ENCODE measurements at regions of chr13 and their contacts with region 1.

Region 1: GRCh38 chr13:106536244-106537034 is 977 bp upstream of the EFNB2 start:
- DNase-seq: peak; percentile 95
- ATAC-seq: peak; percentile 79

Region 2: DNA sequence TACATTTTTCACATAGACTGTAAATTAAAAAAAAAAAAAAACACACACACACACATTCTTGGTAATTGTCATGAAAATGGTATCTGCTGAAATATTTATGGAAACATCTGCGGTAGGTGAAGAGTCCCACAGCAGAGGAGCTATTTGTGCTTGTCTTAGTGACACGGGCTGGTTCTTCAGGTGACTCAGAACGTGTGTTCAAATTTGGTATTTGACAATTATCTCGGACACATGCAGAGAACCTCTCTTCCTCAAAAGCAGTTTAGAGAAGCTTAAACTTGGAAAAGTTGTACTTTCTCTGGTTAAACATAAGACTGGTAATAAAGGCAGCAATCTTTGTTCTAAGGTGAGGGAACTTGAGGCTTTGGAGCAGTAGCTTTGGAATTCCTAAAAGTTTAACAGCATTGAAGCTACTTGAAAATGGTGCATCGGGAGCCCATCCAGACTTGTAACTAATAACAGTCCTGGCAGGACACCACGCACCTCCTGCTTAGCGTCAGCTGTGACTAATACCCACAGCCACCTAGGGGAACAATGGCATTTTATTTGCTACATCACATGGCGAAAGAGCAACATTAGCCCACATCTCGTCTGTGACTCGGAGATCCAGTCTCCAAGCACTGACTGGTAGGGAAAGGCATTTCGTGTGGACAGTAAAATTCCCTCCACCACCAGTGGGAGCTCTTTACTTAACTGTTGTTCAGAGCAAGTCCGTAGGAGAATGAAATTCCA is 1965.1 kb before region 1 on chr13:
- intact Hi-C with region 1: loop called (anchors 5 kb)
- DNase-seq: no peak
- ATAC-seq: peak; percentile 52

Region 3: GRCh38 chr13:105410602-105411001 is 1125.8 kb before region 1 on chr13:
- intact Hi-C with region 1: loop called (anchors 2 kb)
- DNase-seq: peak; percentile 77
- ATAC-seq: no peak

Region 4: GRCh38 chr13:106291006-106291405 is 245.4 kb before region 1 on chr13:
- intact Hi-C with region 1: no loop called
- DNase-seq: no peak
- ATAC-seq: no peak

Region 5: DNA sequence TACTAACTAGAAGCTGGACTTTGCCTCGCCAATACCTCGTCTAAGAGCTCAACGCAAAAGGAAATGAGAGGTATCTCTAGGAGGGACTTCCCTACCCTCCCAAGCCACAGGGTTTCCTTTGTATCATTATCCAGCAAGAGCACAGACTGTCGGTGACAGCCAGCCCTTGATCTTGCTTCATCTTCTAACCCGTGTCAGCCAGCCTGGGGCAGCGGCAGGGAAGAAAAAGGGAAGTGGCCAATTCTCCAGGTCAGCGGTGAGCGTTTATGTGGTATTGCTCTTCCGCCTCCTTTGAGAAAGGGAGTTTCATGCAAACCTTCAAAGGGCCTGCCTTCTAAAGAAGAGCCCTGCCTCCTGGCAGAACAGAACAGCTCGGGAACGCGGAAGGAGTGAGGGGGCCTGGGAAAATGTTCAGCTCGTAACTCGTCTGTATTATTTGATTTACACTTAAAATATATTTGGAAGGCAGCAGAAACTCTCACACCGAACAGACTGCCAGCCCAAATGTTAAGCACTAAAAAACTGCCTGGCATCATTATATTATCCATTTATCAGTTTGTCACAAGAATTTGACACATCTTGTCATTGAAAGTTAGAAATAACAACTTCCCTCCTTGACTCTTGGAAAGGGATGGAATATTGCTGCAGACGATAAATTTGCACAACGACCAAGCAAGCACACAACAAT is 42.8 kb before region 1 on chr13:
- intact Hi-C with region 1: loop called (anchors 5 kb)
- DNase-seq: no peak
- ATAC-seq: no peak

Region 6: GRCh38 chr13:106619688-106620555 is 83.5 kb after region 1 on chr13:
- intact Hi-C with region 1: loop called (anchors 2 kb)
- DNase-seq: no peak
- ATAC-seq: peak; percentile 84

Region 7: GRCh38 chr13:106917673-106918556 is 381.5 kb after region 1 on chr13:
- intact Hi-C with region 1: loop called (anchors 2 kb)
- DNase-seq: peak; percentile 84
- ATAC-seq: peak; percentile 94